Activated T-helper 1 cell treated with anti-CD3 and anti-CD28 coated beads, Interleukin-12 subunit alpha, Interleukin-12 subunit beta, Interleukin-2, Interleukin-4 antibody, amounts not matched to agents 30 ng/mL and 10 ng/mL and 1 ng/mL, durations not matched to agents 14 hours and 24 hours and 36 hours (primary cell): ENCODE measurements at regions of chr9 and their contacts with region 1.

Region 1: DNA sequence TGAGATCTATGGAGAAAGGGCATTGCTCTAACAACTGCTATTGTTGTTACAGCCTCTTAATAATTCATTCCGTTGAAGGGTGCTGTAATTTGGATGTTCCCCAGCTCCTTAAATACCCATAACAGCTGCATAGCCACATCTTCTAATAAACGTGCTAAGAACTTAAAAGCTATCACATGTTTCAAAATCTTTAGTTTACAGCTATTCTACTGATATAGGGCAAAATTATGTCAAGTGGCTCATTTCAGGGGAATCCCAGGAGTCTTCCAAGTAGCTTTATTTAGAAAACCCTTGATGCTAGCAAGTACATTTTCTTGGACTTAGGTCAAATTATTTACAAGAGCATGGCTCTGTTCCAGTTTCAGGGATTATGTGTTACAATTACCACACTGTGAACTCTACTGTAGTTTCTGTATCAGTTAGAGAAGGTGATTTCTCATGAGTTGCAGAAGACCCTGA is 990.4 kb upstream of the ACO1 start:
- DNase-seq: no peak
- H3K4me3 Mint-ChIP-seq: no peak overlapping the region
- H3K27ac Mint-ChIP-seq: no peak overlapping the region
- H3K4me1 Mint-ChIP-seq: peaks cover 6% of the 10 kb centered on the region
- H3K27me3 Mint-ChIP-seq: peaks cover 4% of the 10 kb centered on the region

Region 2: GRCh38 chr9:31335529-31336234 is 58.4 kb before region 1 on chr9:
- intact Hi-C with region 1: loop called (anchors 5 kb)
- DNase-seq: no peak
- H3K4me3 Mint-ChIP-seq: no peak overlapping the region
- H3K27ac Mint-ChIP-seq: no peak overlapping the region
- H3K4me1 Mint-ChIP-seq: peaks cover 10% of the 10 kb centered on the region
- H3K27me3 Mint-ChIP-seq: no peaks in the 10 kb centered on the region